ENCODE measurements at regions of chrX and their contacts with region 1.

Region 1: GRCh38 chrX:115330498-115331168 is 41.1 kb downstream of the LUZP4 start:
- DNase-seq: peak; percentile 18 to 75
- ATAC-seq: peak; percentile 54 to 86; a peak in 4 of 6 replicates
- H3K4me3 ChIP-seq: peak overlapping the region; percentile 42
- H3K27ac ChIP-seq: peak overlapping the region; percentile 67 to 81; a peak in 5 of 6 replicates
- H3K4me1 ChIP-seq: 0 out of 3 replicates have a peak, but pooled peaks cover 3% of the 10 kb centered on the region
- CTCF ChIP-seq: peak; percentile 81
- EP300 ChIP-seq: no peak
- POLR2A ChIP-seq: no peak
- RAD21 ChIP-seq: peak; percentile 92 to 95

Region 2: DNA sequence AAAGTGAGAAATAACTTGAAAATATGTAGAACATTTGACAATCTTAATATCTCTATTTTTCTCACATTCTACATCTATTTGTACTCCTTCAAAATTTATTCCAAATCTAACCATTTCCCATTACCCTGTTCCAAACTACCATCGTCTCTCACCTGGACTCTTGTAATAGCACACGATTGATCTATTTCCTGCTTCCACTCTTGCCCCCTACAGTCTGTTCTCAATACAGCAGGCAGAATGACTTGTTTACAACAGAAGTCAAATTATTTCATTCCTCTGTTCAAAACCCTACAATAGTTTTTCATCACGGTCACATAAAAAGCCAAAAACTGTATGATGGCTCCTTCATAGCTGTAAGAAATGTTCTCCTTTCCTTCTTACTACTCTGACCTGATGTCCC is 62.2 kb before region 1 on chrX:
- CTCF ChIA-PET with region 1: no interaction called
- POLR2A ChIA-PET with region 1: no interaction called
- DNase-seq: peak; percentile 3 to 18
- ATAC-seq: peak in 1 of 2 experiments; percentile 65; a peak in 3 of 6 replicates
- H3K4me3 ChIP-seq: no peak overlapping the region
- H3K27ac ChIP-seq: no peak overlapping the region
- H3K4me1 ChIP-seq: no peaks in the 10 kb centered on the region
- CTCF ChIP-seq: no peak
- EP300 ChIP-seq: no peak
- POLR2A ChIP-seq: no peak
- RAD21 ChIP-seq: no peak

Region 3: DNA sequence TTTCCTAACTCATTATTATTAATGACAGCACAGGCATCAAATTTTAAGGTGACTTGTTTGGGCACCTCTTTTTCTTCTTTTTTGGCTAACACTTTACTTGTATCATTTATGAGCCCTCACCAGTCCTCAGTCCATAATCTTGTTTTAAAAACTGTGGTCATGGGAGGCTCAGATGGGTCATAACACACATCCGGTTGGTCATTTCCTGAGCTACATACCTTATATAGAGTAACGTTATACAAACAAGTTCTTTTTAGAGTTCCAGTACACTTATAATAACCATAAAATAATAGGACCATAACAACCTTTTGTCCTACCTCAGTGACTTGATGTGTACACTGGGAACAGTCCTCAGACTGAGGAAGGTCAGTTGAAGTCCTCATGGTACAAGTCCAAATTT is 209.2 kb after region 1 on chrX:
- CTCF ChIA-PET with region 1: no interaction called
- POLR2A ChIA-PET with region 1: no interaction called
- DNase-seq: no peak
- ATAC-seq: no peak
- H3K4me3 ChIP-seq: no peak overlapping the region
- H3K27ac ChIP-seq: no peak overlapping the region
- H3K4me1 ChIP-seq: no peaks in the 10 kb centered on the region
- CTCF ChIP-seq: no peak
- EP300 ChIP-seq: no peak
- POLR2A ChIP-seq: no peak
- RAD21 ChIP-seq: no peak

Region 4: GRCh38 chrX:115560978-115561604 is 230.5 kb after region 1 on chrX and contains the start of gene PLS3:
- CTCF ChIA-PET with region 1: interaction called, 25 read pairs
- POLR2A ChIA-PET with region 1: interaction called, 4 read pairs
- DNase-seq: peak; percentile 89 to 94
- ATAC-seq: peak; percentile 88 to 92
- H3K4me3 ChIP-seq: peak within 1 kb of the TSS; percentile 83
- H3K27ac ChIP-seq: peak within 1 kb of the TSS; percentile 95 to 99
- H3K4me1 ChIP-seq: peaks cover 66% of the 10 kb centered on the region
- CTCF ChIP-seq: no peak
- EP300 ChIP-seq: no peak
- POLR2A ChIP-seq: peak; percentile 72
- RAD21 ChIP-seq: no peak
- polyA plus RNA-seq, gene PLS3: 411 and 437 TPM in 2 replicates

Region 5: GRCh38 chrX:115642895-115643530 is 312.4 kb after region 1 on chrX:
- CTCF ChIA-PET with region 1: interaction called, 35 read pairs
- POLR2A ChIA-PET with region 1: no interaction called
- DNase-seq: peak; percentile 9 to 65
- ATAC-seq: peak in 1 of 2 experiments; percentile 33; a peak in 1 of 6 replicates
- H3K4me3 ChIP-seq: no peak overlapping the region
- H3K27ac ChIP-seq: 0 out of 6 replicates have a peak overlapping the region, but pooled peaks of 1 of the 2 experiments have one; percentile 24
- H3K4me1 ChIP-seq: peaks cover 5% of the 10 kb centered on the region; the same call in 2 of the 3 replicates
- CTCF ChIP-seq: peak; percentile 76
- EP300 ChIP-seq: no peak
- POLR2A ChIP-seq: no peak
- RAD21 ChIP-seq: peak; percentile 79 to 81

Region 6: DNA sequence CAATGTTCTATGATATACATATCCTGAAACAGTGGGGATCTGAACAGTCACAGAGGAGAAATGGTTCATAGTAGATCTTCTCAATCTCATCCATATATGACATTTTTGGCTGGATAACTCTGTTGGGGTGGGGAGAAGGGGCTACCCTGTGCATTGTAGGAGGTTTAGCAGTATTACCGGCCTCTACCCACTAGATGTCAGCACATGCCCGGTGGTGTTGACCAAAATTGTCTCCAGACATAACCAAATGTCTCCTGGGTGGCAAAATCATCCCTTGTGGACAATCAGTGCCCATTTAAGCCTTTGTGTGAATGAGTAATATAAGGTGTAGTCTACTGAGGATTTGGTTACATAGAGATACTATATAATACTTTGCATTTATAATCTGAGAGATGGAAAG is 320.3 kb after region 1 on chrX:
- CTCF ChIA-PET with region 1: interaction called, 26 read pairs
- POLR2A ChIA-PET with region 1: no interaction called
- DNase-seq: peak; percentile 21 to 51
- ATAC-seq: peak; percentile 84 to 89; a peak in 5 of 6 replicates
- H3K4me3 ChIP-seq: no peak overlapping the region
- H3K27ac ChIP-seq: no peak overlapping the region
- H3K4me1 ChIP-seq: peaks cover 14% of the 10 kb centered on the region; the same call in 2 of the 3 replicates
- CTCF ChIP-seq: peak; percentile 57
- EP300 ChIP-seq: no peak
- POLR2A ChIP-seq: no peak
- RAD21 ChIP-seq: peak; percentile 55 to 57; a peak in 4 of 5 replicates

Region 7: DNA sequence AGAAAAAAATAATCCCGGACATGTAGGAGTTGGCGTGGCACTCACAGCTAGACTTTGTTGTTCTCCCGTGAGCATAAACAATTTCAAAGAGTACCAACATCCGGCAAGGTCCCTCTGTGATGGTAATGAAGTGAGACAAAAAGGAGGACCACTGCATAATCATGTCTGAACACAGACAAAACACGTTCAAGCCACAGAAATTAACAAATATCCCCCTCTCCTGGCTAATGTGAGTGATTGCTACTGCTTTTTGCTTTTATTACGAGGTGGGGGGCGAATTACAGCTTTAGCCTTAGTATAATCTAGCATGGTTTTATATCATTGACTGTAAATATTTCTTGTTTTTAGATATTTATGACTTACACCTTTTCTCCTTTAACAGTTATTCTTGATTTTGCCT is 348.8 kb after region 1 on chrX:
- CTCF ChIA-PET with region 1: interaction called, 10 read pairs
- POLR2A ChIA-PET with region 1: no interaction called
- DNase-seq: peak; percentile 17 to 36
- ATAC-seq: peak; percentile 39 to 79; a peak in 3 of 6 replicates
- H3K4me3 ChIP-seq: peak overlapping the region; percentile 34; the same call in 1 of the 3 replicates
- H3K27ac ChIP-seq: no peak overlapping the region
- H3K4me1 ChIP-seq: no peaks in the 10 kb centered on the region
- CTCF ChIP-seq: peak; percentile 48
- EP300 ChIP-seq: no peak
- POLR2A ChIP-seq: no peak
- RAD21 ChIP-seq: peak; percentile 57 to 61